Naive thymus-derived CD4-positive, alpha-beta T cell (primary cell): ENCODE measurements at regions of chr4 and their contacts with region 1.

Region 1: DNA sequence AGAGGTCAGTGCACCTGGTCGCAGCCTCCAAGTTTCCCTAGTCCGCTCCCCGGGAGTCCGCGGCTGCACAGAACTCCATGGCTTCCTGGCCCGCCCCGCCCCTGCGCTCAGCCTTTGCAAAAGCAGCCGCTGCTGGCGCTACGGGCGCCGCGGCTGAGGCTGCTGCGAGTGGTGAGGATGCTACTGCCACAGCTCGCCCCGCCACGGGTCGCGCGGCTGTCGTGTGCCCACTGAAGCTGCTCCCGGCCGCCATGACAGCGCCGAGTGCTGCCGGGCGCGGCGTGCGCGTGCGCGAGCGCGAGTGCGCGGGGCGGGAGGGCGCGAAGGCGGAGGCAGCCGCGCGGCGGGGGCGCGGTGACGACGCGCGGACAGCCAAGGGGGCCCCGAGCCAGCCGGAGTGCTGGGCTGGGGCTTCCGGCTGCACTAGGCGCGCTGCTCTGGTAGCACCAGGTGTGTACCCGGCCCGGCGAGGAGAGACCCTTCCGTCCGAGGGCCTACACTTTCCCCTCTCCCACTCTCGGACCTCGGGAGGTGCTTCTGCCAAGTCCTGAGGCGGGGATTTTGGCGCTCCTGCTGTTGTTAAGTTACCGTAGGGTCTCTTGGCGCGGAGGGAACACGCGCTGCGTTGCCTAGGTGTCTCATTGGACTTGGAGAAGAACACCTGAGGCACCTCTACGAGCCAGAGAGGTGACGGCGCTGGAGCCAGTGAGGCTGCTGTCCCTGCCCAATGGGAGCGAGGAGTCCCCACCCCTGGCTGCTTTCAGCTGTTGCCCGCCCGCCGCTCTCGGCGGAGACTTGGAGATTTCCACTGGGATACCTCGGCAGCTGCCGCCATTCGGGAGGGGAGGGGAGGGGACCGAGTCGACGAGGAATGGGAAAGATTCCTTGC is 619 bp upstream of the LRBA start:
- DNase-seq: peak; percentile 76 to 89 (median 87)
- ATAC-seq: peak; percentile 88
- H3K4me3 ChIP-seq: peak overlapping the region; percentile 99
- H3K4me3 Mint-ChIP-seq: peak overlapping the region; percentile 95 to 100 (median 99)
- H3K27ac ChIP-seq: peak overlapping the region; percentile 97
- H3K27ac Mint-ChIP-seq: peak overlapping the region; percentile 90 to 100 (median 98)
- H3K4me1 ChIP-seq: peaks cover 18 to 32% of the 10 kb centered on the region in 2 donors
- H3K4me1 Mint-ChIP-seq: peaks cover 20 to 34% (median 32%) of the 10 kb centered on the region in 7 donors
- H3K27me3 ChIP-seq: no peaks in the 10 kb centered on the region
- H3K27me3 Mint-ChIP-seq: no peaks in the 10 kb centered on the region

Region 2: DNA sequence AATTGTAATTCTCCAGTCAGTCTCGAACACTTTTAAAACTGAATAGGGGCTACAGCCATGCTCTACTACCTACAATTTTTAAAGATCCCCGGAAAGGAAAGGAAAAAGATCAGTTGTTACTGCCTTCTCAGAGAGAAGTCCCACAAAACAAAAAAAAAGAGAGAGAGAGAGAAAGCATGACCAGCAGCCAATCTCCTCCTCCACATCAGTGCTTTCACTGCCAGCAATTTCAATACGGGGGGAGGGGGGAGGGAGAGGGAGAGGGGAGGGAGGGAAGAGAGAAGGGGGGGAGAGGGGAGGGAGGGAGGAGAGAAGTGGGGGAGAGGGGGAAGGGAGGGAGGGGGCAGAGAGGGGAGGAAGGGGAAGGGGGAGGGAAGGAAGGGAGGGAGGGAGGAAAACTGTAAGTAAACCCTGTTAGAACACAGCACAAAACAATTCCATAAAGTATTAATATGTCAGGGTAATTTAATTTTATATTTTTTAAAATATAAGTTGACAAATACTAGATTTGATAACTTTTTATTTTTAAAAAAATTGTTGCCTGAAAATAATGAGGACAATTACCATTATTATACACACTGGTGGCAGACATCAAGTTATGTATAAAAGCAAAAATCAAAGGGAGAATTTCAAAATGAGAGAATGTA is 108.6 kb before region 1 on chr4:
- CTCF ChIA-PET with region 1: no interaction called
- POLR2A ChIA-PET with region 1: no interaction called
- intact Hi-C with region 1: loop called in 1 of 2 experiments (anchors 5 kb)
- DNase-seq: no peak
- ATAC-seq: no peak
- H3K4me3 ChIP-seq: no peak overlapping the region
- H3K4me3 Mint-ChIP-seq: no peak overlapping the region
- H3K27ac ChIP-seq: no peak overlapping the region
- H3K27ac Mint-ChIP-seq: peak overlapping the region in 5 of 9 donors; percentile 11 to 80 (median 76)
- H3K4me1 ChIP-seq: no peaks in the 10 kb centered on the region
- H3K4me1 Mint-ChIP-seq: peaks cover 5 to 22% (median 18%) of the 10 kb centered on the region in 7 donors
- H3K27me3 ChIP-seq: no peaks in the 10 kb centered on the region
- H3K27me3 Mint-ChIP-seq: no peaks in the 10 kb centered on the region

Region 3: DNA sequence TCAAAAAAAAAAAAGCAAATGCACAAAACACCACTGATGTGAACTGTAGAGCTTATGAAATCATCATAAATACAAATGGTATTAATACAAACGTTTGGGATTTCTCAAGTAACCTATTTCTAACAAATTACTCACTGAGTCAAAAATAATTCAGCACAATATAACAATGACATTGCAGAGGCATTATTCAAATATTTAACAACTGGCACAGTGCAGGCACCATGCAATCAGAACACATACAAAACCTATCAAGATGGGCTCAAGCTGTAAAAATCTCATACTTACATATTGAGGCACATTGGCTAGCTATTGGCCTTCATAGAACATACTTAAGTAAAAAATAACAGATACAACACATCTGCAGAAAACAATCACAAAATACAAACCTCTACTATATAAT is 81.7 kb before region 1 on chr4:
- CTCF ChIA-PET with region 1: no interaction called
- POLR2A ChIA-PET with region 1: no interaction called
- intact Hi-C with region 1: loop called in 1 of 2 experiments (anchors 5 kb)
- DNase-seq: no peak
- ATAC-seq: no peak
- H3K4me3 ChIP-seq: no peak overlapping the region
- H3K4me3 Mint-ChIP-seq: no peak overlapping the region
- H3K27ac ChIP-seq: no peak overlapping the region
- H3K27ac Mint-ChIP-seq: no peak overlapping the region
- H3K4me1 ChIP-seq: peaks cover 0 to 3% of the 10 kb centered on the region in 2 donors
- H3K4me1 Mint-ChIP-seq: peaks cover 5 to 36% (median 28%) of the 10 kb centered on the region in 7 donors
- H3K27me3 ChIP-seq: no peaks in the 10 kb centered on the region
- H3K27me3 Mint-ChIP-seq: no peaks in the 10 kb centered on the region

Region 4: GRCh38 chr4:151031831-151032605 is 16.3 kb after region 1 on chr4:
- CTCF ChIA-PET with region 1: no interaction called
- POLR2A ChIA-PET with region 1: no interaction called
- intact Hi-C with region 1: loop called in 1 of 2 experiments (anchors 1 kb)
- DNase-seq: no peak
- ATAC-seq: no peak
- H3K4me3 ChIP-seq: no peak overlapping the region
- H3K4me3 Mint-ChIP-seq: peak overlapping the region in 9 of 10 donors; percentile 16 to 82 (median 59)
- H3K27ac ChIP-seq: no peak overlapping the region
- H3K27ac Mint-ChIP-seq: peak overlapping the region in 3 of 9 donors; percentile 2 to 75 (median 73)
- H3K4me1 ChIP-seq: peaks cover 0 to 5% of the 10 kb centered on the region in 2 donors
- H3K4me1 Mint-ChIP-seq: peaks cover 0 to 20% (median 11%) of the 10 kb centered on the region in 7 donors
- H3K27me3 ChIP-seq: no peaks in the 10 kb centered on the region
- H3K27me3 Mint-ChIP-seq: peaks cover 0 to 13% (median 0%) of the 10 kb centered on the region in 5 donors

Region 5: GRCh38 chr4:151099229-151099975 is 83.7 kb after region 1 on chr4 and contains the start of gene RPS3A:
- CTCF ChIA-PET with region 1: no interaction called
- POLR2A ChIA-PET with region 1: interaction called, 36 read pairs
- intact Hi-C with region 1: loop called (anchors 1 kb)
- DNase-seq: peak; percentile 95 to 100 (median 99)
- ATAC-seq: peak; percentile 97
- H3K4me3 ChIP-seq: peak within 1 kb of the TSS; percentile 96
- H3K4me3 Mint-ChIP-seq: peak within 1 kb of the TSS; percentile 89 to 99 (median 96)
- H3K27ac ChIP-seq: peak within 1 kb of the TSS; percentile 89
- H3K27ac Mint-ChIP-seq: peak within 1 kb of the TSS; percentile 97 to 99 (median 98)
- H3K4me1 ChIP-seq: peaks cover 14 to 18% of the 10 kb centered on the region in 2 donors
- H3K4me1 Mint-ChIP-seq: peaks cover 24 to 43% (median 28%) of the 10 kb centered on the region in 7 donors
- H3K27me3 ChIP-seq: no peaks in the 10 kb centered on the region
- H3K27me3 Mint-ChIP-seq: peaks cover 0 to 4% (median 0%) of the 10 kb centered on the region in 5 donors
- total RNA-seq, gene RPS3A: 1,723 to 5,358 (median 3,483) TPM

Region 6: GRCh38 chr4:151408630-151409469 is 393.1 kb after region 1 on chr4 and contains the start of gene FHIP1A:
- CTCF ChIA-PET with region 1: no interaction called
- POLR2A ChIA-PET with region 1: no interaction called
- intact Hi-C with region 1: loop called (anchors 1 to 2 kb)
- DNase-seq: peak; percentile 67 to 89 (median 87)
- ATAC-seq: peak; percentile 96
- H3K4me3 ChIP-seq: peak within 1 kb of the TSS; percentile 63
- H3K4me3 Mint-ChIP-seq: peak within 1 kb of the TSS; percentile 86 to 97 (median 94)
- H3K27ac ChIP-seq: peak within 1 kb of the TSS; percentile 53
- H3K27ac Mint-ChIP-seq: peak within 1 kb of the TSS; percentile 21 to 92 (median 85)
- H3K4me1 ChIP-seq: peaks cover 0 to 6% of the 10 kb centered on the region in 2 donors
- H3K4me1 Mint-ChIP-seq: peaks cover 15 to 26% (median 23%) of the 10 kb centered on the region in 7 donors
- H3K27me3 ChIP-seq: no peaks in the 10 kb centered on the region
- H3K27me3 Mint-ChIP-seq: peaks cover 0 to 56% (median 8%) of the 10 kb centered on the region in 5 donors
- total RNA-seq, gene FHIP1A: 0.05 to 2.7 (median 1.9) TPM

Region 7: GRCh38 chr4:152106113-152106763 is 1090.5 kb after region 1 on chr4:
- CTCF ChIA-PET with region 1: no interaction called
- POLR2A ChIA-PET with region 1: no interaction called
- intact Hi-C with region 1: loop called in 1 of 2 experiments (anchors 10 kb)
- DNase-seq: peak in 1 of 9 donors; percentile 26
- ATAC-seq: peak; percentile 27
- H3K4me3 ChIP-seq: no peak overlapping the region
- H3K4me3 Mint-ChIP-seq: peak overlapping the region in 9 of 10 donors; percentile 7 to 83 (median 53)
- H3K27ac ChIP-seq: peak overlapping the region; percentile 89
- H3K27ac Mint-ChIP-seq: peak overlapping the region; percentile 39 to 99 (median 95)
- H3K4me1 ChIP-seq: peaks cover 55 to 95% of the 10 kb centered on the region in 2 donors
- H3K4me1 Mint-ChIP-seq: peaks cover 64 to 100% (median 93%) of the 10 kb centered on the region in 7 donors
- H3K27me3 ChIP-seq: no peaks in the 10 kb centered on the region
- H3K27me3 Mint-ChIP-seq: no peaks in the 10 kb centered on the region